Endothelial cell of umbilical vein (primary cell): ENCODE measurements at regions of chr3 and their contacts with region 1.

Region 1: GRCh38 chr3:14203521-14204079 is 25.0 kb downstream of the LSM3 start:
- DNase-seq: peak; percentile 72
- H3K4me3 ChIP-seq: no peak overlapping the region
- H3K27ac ChIP-seq: no peak overlapping the region
- H3K4me1 ChIP-seq: peaks cover 2% of the 10 kb centered on the region
- H3K27me3 ChIP-seq: no peaks in the 10 kb centered on the region
- CTCF ChIP-seq: peak; percentile 80 to 81
- POLR2A ChIP-seq: no peak

Region 2: GRCh38 chr3:14170531-14171173 is 32.9 kb before region 1 on chr3:
- CTCF ChIA-PET with region 1: interaction called, 11 read pairs
- POLR2A ChIA-PET with region 1: no interaction called
- dilution Hi-C with region 1: no loop called
- intact Hi-C with region 1: no loop called
- DNase-seq: peak; percentile 37
- H3K4me3 ChIP-seq: no peak overlapping the region
- H3K27ac ChIP-seq: peak overlapping the region; percentile 42
- H3K4me1 ChIP-seq: peaks cover 15% of the 10 kb centered on the region
- H3K27me3 ChIP-seq: no peaks in the 10 kb centered on the region
- CTCF ChIP-seq: no peak
- POLR2A ChIP-seq: no peak

Region 3: GRCh38 chr3:14216257-14217048 is 12.9 kb after region 1 on chr3:
- CTCF ChIA-PET with region 1: interaction called, 52 read pairs
- POLR2A ChIA-PET with region 1: interaction called, 3 read pairs
- dilution Hi-C with region 1: no loop called
- intact Hi-C with region 1: no loop called
- DNase-seq: peak; percentile 83
- H3K4me3 ChIP-seq: peak overlapping the region in 2 of 3 experiments; percentile 17 to 49
- H3K27ac ChIP-seq: no peak overlapping the region
- H3K4me1 ChIP-seq: no peaks in the 10 kb centered on the region
- H3K27me3 ChIP-seq: no peaks in the 10 kb centered on the region
- CTCF ChIP-seq: peak; percentile 42 to 69
- POLR2A ChIP-seq: no peak

Region 4: DNA sequence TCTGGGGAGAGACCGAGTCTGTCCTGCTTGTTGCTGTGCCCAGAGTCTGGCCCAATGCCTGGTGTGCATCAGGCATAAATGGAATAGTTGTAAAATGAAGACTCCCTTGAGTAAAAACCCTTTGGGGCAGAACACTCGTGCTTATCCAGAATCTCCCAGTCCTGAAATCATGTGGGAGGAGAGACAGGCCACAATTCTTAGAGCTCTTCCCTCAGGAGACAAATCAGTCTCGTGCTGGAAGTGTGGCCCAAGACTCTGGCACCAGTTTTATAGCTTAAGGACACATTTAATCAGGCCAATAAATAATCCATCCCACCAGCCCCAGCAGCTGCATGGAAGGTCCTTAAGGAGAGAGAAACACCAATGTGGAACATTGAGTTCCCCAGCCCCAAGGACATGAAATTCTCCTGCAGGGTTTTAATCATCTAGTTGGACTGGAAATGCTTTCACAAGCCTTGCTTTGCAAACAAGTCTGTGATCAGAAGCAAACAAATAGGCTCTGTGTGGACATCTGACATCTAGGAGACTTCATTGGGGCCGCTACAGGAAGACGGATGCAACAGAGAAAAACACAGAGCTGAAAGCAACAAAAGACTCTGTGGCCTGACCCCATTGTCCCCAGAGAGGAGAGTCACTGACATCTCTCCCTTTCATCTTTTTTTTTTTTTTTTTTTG is 45.4 kb after region 1 on chr3:
- CTCF ChIA-PET with region 1: interaction called, 15 read pairs
- POLR2A ChIA-PET with region 1: no interaction called
- dilution Hi-C with region 1: no loop called
- intact Hi-C with region 1: no loop called
- DNase-seq: no peak
- H3K4me3 ChIP-seq: no peak overlapping the region
- H3K27ac ChIP-seq: no peak overlapping the region
- H3K4me1 ChIP-seq: no peaks in the 10 kb centered on the region
- H3K27me3 ChIP-seq: peaks cover 0 to 2% of the 10 kb centered on the region in 2 experiments
- CTCF ChIP-seq: no peak
- POLR2A ChIP-seq: no peak

Region 5: DNA sequence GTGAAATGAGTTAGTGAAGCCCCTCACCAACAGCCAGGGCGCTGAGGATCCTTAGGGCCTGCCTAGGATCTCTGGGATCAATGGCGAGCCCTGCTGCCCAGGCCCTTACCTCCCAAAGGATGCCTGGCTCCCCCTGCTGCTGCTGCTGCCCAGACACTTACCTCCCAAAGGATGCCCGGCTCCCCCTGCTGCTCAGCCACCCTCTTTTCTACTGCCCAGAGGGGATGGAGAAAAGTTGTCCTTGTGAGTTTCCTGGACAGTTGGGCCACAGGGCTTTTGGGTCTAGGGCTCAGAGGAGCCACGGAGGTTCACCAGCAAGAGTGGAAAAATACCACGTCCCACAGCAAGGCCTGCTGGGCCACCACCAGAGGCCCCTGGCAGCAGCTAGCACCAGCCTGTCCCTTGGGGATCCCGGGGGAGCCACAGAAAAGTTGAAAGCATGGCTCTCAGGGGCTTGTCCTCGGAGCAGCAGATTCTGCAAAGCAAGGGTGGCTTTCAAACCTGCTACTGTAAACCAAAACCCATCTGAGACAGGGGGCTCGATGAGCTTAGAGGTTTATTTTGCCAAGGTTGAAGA is 258.2 kb after region 1 on chr3:
- CTCF ChIA-PET with region 1: interaction called, 93 read pairs
- POLR2A ChIA-PET with region 1: no interaction called
- dilution Hi-C with region 1: no loop called
- intact Hi-C with region 1: loop called (anchors 2 kb)
- DNase-seq: peak; percentile 73
- H3K4me3 ChIP-seq: no peak overlapping the region
- H3K27ac ChIP-seq: no peak overlapping the region
- H3K4me1 ChIP-seq: peaks cover 38% of the 10 kb centered on the region
- H3K27me3 ChIP-seq: no peaks in the 10 kb centered on the region
- CTCF ChIP-seq: peak; percentile 77 to 93
- POLR2A ChIP-seq: no peak

Region 6: GRCh38 chr3:14548321-14548729 is 344.7 kb after region 1 on chr3:
- CTCF ChIA-PET with region 1: interaction called, 168 read pairs
- POLR2A ChIA-PET with region 1: no interaction called
- dilution Hi-C with region 1: no loop called
- intact Hi-C with region 1: loop called (anchors 1 kb)
- DNase-seq: peak; percentile 50
- H3K4me3 ChIP-seq: no peak overlapping the region
- H3K27ac ChIP-seq: no peak overlapping the region
- H3K4me1 ChIP-seq: no peaks in the 10 kb centered on the region
- H3K27me3 ChIP-seq: peaks cover 0 to 3% of the 10 kb centered on the region in 2 experiments
- CTCF ChIP-seq: peak; percentile 69 to 87
- POLR2A ChIP-seq: no peak

Region 7: GRCh38 chr3:14780927-14781507 is 577.4 kb after region 1 on chr3:
- CTCF ChIA-PET with region 1: interaction called, 35 read pairs
- POLR2A ChIA-PET with region 1: no interaction called
- dilution Hi-C with region 1: no loop called
- intact Hi-C with region 1: no loop called
- DNase-seq: peak; percentile 62
- H3K4me3 ChIP-seq: no peak overlapping the region
- H3K27ac ChIP-seq: no peak overlapping the region
- H3K4me1 ChIP-seq: no peaks in the 10 kb centered on the region
- H3K27me3 ChIP-seq: peaks cover 6 to 14% of the 10 kb centered on the region in 2 experiments
- CTCF ChIP-seq: peak; percentile 63 to 74
- POLR2A ChIP-seq: no peak